ENCODE measurements at regions of chr2 and their contacts with region 1.

Region 1: GRCh38 chr2:186460465-186460864 is 25.6 kb upstream of the ZC3H15 start:
- DNase-seq: no peak
- CTCF ChIP-seq: peak; percentile 56

Region 2: GRCh38 chr2:185628985-185629384 is 831.5 kb before region 1 on chr2:
- in situ Hi-C with region 1: loop called (anchors 25 kb)
- DNase-seq: no peak
- CTCF ChIP-seq: peak; percentile 52

Region 3: DNA sequence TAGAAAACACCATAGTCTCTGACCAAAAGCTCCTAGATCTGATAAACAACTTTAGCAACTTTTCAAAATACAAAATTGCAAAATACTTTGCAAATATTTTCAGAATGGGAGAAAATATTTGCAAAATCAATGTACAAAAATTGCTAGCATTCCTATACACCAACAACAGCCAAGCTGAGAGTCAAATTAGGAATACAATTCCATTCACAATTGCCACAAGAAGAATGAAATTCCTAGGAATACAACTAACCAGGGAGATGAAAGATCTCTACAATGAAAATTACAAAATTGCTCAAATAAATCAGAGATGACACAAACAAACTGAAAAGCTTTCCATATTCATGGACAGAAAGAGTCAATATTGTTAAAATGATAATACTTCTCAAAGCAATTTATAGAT is 301.4 kb before region 1 on chr2:
- in situ Hi-C with region 1: no loop called
- DNase-seq: no peak
- CTCF ChIP-seq: no peak

Region 4: GRCh38 chr2:186365406-186365805 is 95.1 kb before region 1 on chr2:
- in situ Hi-C with region 1: no loop called
- DNase-seq: no peak
- CTCF ChIP-seq: no peak

Region 5: DNA sequence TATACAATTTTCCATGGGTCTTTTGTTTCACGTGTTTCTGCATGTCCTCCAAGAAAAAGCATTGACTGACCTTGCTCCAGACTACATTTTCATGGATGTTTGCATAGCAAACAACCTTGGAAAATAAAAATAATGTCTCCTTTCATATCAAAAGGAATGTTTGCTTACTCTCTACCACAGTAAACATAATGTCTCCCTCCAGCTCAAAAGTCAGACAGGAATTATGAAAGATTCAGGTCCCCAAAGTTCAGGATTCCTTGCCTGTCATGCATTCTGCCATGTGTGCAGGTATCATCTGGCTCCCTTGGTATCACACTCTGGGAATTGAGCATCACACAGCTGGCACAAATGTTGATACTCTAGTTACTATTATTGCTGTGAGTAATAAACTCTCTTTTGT is 77.5 kb before region 1 on chr2:
- in situ Hi-C with region 1: no loop called
- DNase-seq: no peak
- CTCF ChIP-seq: no peak

Region 6: DNA sequence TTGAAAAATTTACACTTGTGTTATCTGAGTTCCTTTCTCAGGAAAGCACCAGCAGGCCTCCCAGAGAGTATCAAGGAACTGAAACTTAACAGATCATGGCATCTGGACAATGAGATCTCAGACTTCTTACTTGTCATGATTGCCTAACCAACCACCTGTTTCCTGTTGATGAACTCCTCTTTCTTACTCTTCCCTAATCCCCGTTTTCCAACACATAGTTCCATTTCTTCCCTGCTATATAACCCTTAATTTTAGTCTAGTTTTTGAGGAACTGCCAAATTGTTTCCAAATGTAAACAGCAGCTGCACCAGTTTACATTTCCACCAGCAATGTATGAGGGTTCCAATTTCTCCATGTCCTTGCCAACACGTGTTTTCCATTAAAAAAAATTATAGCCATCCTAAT is 227.3 kb after region 1 on chr2:
- in situ Hi-C with region 1: no loop called
- DNase-seq: no peak
- CTCF ChIP-seq: no peak